ENCODE measurements at regions of chr12 and their contacts with region 1.

Region 1: DNA sequence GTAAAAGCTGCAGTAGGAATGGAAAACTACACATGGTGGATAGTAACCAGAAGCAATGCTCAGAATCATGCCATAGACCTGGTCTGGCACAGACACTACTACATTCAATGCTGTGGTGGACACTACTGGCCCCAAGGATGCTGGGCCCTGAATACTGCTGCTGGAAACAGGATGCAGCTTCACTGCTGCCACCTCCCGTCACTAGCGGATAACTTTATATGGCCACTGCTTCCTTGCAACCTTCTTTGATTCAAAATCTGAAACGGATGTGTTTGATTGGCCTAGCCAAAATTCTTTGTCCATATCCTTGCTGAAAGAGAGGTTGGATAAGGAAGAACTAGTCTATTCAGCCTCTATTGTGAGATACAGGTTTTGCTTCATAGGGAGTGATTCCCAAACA is 30.7 kb downstream of the ADCY6 start:
- DNase-seq: no peak
- H3K4me3 ChIP-seq: no peak overlapping the region
- H3K27ac ChIP-seq: no peak overlapping the region
- H3K27me3 ChIP-seq: no peaks in the 10 kb centered on the region
- CTCF ChIP-seq: no peak

Region 2: DNA sequence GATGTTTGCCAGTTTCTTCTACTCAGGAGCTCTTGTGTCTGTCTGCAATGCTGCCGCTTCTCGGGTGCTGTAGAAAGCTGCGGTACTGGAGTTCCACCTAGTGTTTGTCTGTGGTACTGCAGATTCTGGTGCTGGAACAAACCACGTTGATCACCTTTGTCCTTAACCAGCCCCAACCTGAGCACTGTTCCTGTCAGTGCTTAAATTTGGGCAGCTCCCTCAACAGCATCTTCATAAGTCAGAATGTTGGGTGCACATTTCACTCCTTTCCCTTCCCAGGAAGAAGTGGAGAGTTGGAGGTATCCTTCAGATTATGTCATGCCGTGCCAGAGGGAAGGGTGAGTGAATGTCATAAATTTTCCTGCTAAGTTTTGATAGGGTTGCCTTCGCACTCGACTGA is 139.7 kb before region 1 on chr12:
- CTCF ChIA-PET with region 1: interaction called, 12 read pairs
- POLR2A ChIA-PET with region 1: no interaction called
- DNase-seq: peak; percentile 26
- H3K4me3 ChIP-seq: no peak overlapping the region
- H3K27ac ChIP-seq: no peak overlapping the region
- H3K27me3 ChIP-seq: peaks cover 5% of the 10 kb centered on the region
- CTCF ChIP-seq: peak; percentile 99

Region 3: GRCh38 chr12:48744251-48745008 is 13.8 kb before region 1 on chr12:
- CTCF ChIA-PET with region 1: interaction called, 28 read pairs
- POLR2A ChIA-PET with region 1: interaction called, 4 read pairs
- DNase-seq: no peak
- H3K4me3 ChIP-seq: no peak overlapping the region
- H3K27ac ChIP-seq: no peak overlapping the region
- H3K27me3 ChIP-seq: peaks cover 12% of the 10 kb centered on the region
- CTCF ChIP-seq: no peak

Region 4: DNA sequence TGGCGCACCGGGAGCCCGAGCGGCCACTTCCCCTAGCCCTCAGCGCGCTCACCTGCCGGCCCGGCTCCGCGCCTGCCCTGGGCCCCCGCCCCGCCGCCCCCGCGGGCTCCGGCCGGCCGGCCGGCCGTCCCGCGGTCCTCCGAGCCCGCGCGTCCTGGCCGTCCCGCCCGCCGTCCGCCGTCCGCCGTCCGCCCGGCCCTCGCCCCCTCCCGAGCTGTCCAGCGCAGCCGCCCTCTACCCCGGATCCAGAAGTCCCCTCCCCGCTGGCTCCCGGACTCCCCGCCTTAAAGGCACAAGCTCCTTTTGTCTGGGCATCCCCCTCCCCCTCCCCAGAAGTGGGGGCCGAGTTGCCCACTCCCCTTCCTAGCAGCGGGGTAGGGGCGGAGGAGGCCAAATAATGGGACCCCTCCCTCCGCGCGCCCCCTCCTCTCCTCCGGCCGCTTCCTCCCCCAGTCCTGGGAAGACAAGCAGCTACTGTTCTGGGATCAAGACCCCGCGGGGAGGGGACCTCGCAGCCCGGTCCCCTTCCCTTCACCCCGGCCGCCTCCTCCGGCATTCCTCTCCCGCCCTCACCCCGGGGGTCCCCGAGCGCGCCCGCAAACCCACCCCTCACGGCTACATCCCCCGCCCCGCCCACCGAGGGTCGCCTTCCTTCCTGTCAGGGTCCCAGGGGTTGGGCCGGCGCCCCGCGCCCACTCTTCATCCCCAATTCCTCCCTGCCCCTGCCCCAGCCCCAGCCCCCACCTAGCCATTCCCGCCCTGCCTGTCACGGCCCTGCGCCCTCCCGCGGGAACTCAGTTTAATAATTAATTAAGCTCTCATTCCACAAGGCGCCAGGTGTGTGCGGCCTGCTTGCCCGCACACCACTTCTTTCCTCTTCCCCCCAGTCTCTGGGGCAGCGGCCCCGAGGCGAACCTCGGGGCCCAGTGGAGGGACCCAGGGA is 30.9 kb after region 1 on chr12 and contains the start of gene ADCY6:
- CTCF ChIA-PET with region 1: interaction called, 125 read pairs
- POLR2A ChIA-PET with region 1: no interaction called
- DNase-seq: no peak
- H3K4me3 ChIP-seq: peak within 1 kb of the TSS; percentile 75
- H3K27ac ChIP-seq: no peak within 1 kb of the TSS
- H3K27me3 ChIP-seq: no peaks in the 10 kb centered on the region
- CTCF ChIP-seq: no peak
- polyA plus RNA-seq, gene ADCY6: 26.7 and 31.6 TPM in 2 replicates

Region 5: DNA sequence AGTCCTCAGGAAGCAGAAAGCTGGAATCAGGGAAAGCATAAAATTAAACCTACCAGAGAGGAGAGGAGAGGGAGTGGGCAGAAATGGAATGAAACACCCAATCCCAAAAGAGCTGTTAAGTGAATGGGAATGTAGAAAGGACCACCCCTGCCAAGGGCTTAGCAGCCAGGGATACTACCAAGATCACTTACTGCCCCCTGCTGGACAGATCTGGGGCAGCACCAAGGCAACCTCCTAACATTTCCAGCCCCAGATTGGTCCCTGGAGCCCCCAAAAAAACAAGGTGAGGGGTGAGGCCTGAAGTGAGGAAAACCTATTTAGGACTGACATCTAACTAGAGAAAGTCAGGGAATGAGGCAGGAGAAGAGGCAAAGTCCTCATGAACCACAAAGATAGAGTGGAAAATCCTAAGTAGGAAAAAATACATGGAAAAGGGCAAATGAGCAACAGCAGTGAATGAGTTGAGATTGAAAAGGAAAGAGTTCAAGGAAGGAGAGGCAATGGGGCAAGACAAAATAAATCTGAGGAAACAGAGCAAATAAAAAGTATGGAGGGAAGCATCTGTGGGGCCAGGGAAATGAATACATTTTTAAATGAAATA is 178.3 kb after region 1 on chr12:
- CTCF ChIA-PET with region 1: interaction called, 13 read pairs
- POLR2A ChIA-PET with region 1: no interaction called
- DNase-seq: peak; percentile 59
- H3K4me3 ChIP-seq: no peak overlapping the region
- H3K27ac ChIP-seq: no peak overlapping the region
- H3K27me3 ChIP-seq: no peaks in the 10 kb centered on the region
- CTCF ChIP-seq: peak; percentile 95